Panc1 (cell line): ENCODE measurements at regions of chr6 and their contacts with region 1.

Region 1: GRCh38 chr6:2988426-2989331 is 11.0 kb upstream of the NQO2 start:
- DNase-seq: peak; percentile 87
- ATAC-seq: peak; percentile 89
- H3K4me3 ChIP-seq: peak overlapping the region; percentile 77 to 82
- H3K27ac ChIP-seq: peak overlapping the region; percentile 98
- H3K4me1 ChIP-seq: peaks cover 11% of the 10 kb centered on the region
- H3K27me3 ChIP-seq: no peaks in the 10 kb centered on the region
- CTCF ChIP-seq: peak; percentile 98

Region 2: DNA sequence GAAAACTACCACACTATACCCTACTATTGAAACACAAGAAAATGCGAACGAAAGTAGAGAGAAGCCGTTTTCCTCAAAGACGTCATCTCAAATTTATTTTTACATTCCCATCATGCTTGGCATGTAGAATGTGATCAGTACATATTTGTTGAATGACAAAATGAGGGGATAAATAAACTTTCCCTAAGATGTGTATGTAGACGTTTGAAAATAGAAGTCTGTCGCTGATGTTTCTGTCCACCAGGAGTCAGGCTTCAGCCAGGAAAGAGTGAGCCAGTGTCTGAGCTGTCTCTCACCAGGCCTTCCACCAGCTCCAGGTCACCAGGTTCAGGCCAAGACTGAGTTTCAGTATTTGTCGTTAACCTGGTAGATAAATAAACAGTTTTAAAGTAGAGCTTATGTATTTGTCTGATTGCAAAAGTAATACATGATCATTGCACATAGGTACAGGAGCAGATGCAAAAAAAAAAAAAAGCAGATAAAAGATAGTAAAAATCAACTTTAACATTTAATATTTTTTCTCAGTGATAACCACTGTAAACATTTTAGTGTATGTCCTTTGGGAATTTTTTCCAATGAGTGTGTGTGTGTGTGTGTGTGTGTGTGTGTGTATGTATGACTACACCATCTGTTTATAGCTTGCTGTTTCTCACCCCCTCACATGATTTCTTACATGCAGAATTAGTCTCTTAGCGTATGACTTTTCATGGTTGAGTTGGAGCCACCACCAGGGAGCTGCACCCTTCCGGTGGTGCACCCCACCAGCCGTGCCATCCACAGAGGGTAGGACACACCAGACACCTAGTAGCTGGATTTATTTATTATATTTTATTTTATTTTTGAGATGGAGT is 197.3 kb before region 1 on chr6:
- CTCF ChIA-PET with region 1: interaction called, 18 read pairs
- POLR2A ChIA-PET with region 1: no interaction called
- in situ Hi-C with region 1: no loop called
- intact Hi-C with region 1: no loop called
- DNase-seq: peak; percentile 61
- ATAC-seq: peak; percentile 94
- H3K4me3 ChIP-seq: no peak overlapping the region
- H3K27ac ChIP-seq: peak overlapping the region; percentile 8; the same call in 1 of the 2 replicates
- H3K4me1 ChIP-seq: peaks cover 9% of the 10 kb centered on the region; the same call in 1 of the 2 replicates
- H3K27me3 ChIP-seq: no peaks in the 10 kb centered on the region
- CTCF ChIP-seq: peak; percentile 88

Region 3: GRCh38 chr6:2831392-2831791 is 157.3 kb before region 1 on chr6:
- CTCF ChIA-PET with region 1: no interaction called
- POLR2A ChIA-PET with region 1: no interaction called
- in situ Hi-C with region 1: no loop called
- intact Hi-C with region 1: no loop called
- DNase-seq: no peak
- ATAC-seq: no peak
- H3K4me3 ChIP-seq: no peak overlapping the region
- H3K27ac ChIP-seq: no peak overlapping the region
- H3K4me1 ChIP-seq: no peaks in the 10 kb centered on the region
- H3K27me3 ChIP-seq: no peaks in the 10 kb centered on the region
- CTCF ChIP-seq: no peak

Region 4: DNA sequence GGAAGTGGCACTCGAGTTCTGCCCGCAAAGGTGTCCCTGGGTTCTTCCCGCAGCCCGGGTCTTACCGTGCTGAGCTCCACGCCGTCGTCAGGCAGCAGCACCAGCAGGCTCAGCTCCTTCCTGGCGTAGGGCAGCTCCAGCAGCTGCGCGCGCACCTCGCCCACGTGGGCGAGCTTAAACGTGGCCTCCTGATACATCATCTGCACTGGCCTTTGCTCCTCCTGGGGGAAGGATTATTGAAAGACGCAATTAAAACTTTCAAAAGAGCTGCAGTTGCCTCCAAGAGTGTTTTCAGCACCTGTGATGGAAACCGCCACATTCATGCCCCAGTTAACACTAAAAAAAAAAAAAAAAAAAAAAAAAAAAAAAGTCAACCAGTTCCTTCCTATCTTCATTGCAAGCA is 96.9 kb before region 1 on chr6:
- CTCF ChIA-PET with region 1: no interaction called
- POLR2A ChIA-PET with region 1: interaction called, 24 read pairs
- in situ Hi-C with region 1: no loop called
- intact Hi-C with region 1: no loop called
- DNase-seq: no peak
- ATAC-seq: no peak
- H3K4me3 ChIP-seq: no peak overlapping the region
- H3K27ac ChIP-seq: no peak overlapping the region
- H3K4me1 ChIP-seq: no peaks in the 10 kb centered on the region
- H3K27me3 ChIP-seq: no peaks in the 10 kb centered on the region
- CTCF ChIP-seq: no peak

Region 5: GRCh38 chr6:2952557-2953095 is 36.1 kb before region 1 on chr6:
- CTCF ChIA-PET with region 1: interaction called, 19 read pairs
- POLR2A ChIA-PET with region 1: interaction called, 4 read pairs
- in situ Hi-C with region 1: no loop called
- intact Hi-C with region 1: loop called (anchors 2 kb)
- DNase-seq: peak; percentile 61
- ATAC-seq: peak; percentile 97
- H3K4me3 ChIP-seq: no peak overlapping the region
- H3K27ac ChIP-seq: peak overlapping the region; percentile 70
- H3K4me1 ChIP-seq: peaks cover 7% of the 10 kb centered on the region
- H3K27me3 ChIP-seq: no peaks in the 10 kb centered on the region
- CTCF ChIP-seq: peak; percentile 99

Region 6: GRCh38 chr6:3023663-3024483 is 35.2 kb after region 1 on chr6:
- CTCF ChIA-PET with region 1: interaction called, 3 read pairs
- POLR2A ChIA-PET with region 1: interaction called, 12 read pairs
- in situ Hi-C with region 1: no loop called
- intact Hi-C with region 1: no loop called
- DNase-seq: no peak
- ATAC-seq: peak; percentile 95
- H3K4me3 ChIP-seq: peak overlapping the region; percentile 47 to 81
- H3K27ac ChIP-seq: peak overlapping the region; percentile 73
- H3K4me1 ChIP-seq: 0 out of 2 replicates have a peak, but pooled peaks cover 4% of the 10 kb centered on the region
- H3K27me3 ChIP-seq: no peaks in the 10 kb centered on the region
- CTCF ChIP-seq: no peak

Region 7: GRCh38 chr6:3258720-3259490 is 270.2 kb after region 1 on chr6 and contains the start of gene PSMG4:
- CTCF ChIA-PET with region 1: no interaction called
- POLR2A ChIA-PET with region 1: no interaction called
- in situ Hi-C with region 1: no loop called
- intact Hi-C with region 1: loop called (anchors 10 kb)
- DNase-seq: peak; percentile 33
- ATAC-seq: peak; percentile 93
- H3K4me3 ChIP-seq: peak within 1 kb of the TSS; percentile 86 to 94
- H3K27ac ChIP-seq: peak within 1 kb of the TSS; percentile 88
- H3K4me1 ChIP-seq: peaks cover 18% of the 10 kb centered on the region
- H3K27me3 ChIP-seq: no peaks in the 10 kb centered on the region
- CTCF ChIP-seq: no peak
- total RNA-seq, gene PSMG4: 27.0 TPM